ENCODE measurements at regions of chr1 and their contacts with region 1.

Region 1: GRCh38 chr1:65209005-65209885 is 61.2 kb downstream of the AK4 start:
- DNase-seq: peak in 1 of 5 donors; percentile 39
- ATAC-seq: peak; percentile 25 to 73 (median 58)
- H3K4me3 ChIP-seq: no peak overlapping the region
- H3K27ac ChIP-seq: peak overlapping the region in 2 of 12 donors; percentile 35 to 49
- H3K4me1 ChIP-seq: peaks cover 0 to 23% (median 14%) of the 10 kb centered on the region in 12 donors
- H3K27me3 ChIP-seq: no peaks in the 10 kb centered on the region
- CTCF ChIP-seq: peak; percentile 58 to 81 (median 68)
- POLR2A ChIP-seq: no peak

Region 2: DNA sequence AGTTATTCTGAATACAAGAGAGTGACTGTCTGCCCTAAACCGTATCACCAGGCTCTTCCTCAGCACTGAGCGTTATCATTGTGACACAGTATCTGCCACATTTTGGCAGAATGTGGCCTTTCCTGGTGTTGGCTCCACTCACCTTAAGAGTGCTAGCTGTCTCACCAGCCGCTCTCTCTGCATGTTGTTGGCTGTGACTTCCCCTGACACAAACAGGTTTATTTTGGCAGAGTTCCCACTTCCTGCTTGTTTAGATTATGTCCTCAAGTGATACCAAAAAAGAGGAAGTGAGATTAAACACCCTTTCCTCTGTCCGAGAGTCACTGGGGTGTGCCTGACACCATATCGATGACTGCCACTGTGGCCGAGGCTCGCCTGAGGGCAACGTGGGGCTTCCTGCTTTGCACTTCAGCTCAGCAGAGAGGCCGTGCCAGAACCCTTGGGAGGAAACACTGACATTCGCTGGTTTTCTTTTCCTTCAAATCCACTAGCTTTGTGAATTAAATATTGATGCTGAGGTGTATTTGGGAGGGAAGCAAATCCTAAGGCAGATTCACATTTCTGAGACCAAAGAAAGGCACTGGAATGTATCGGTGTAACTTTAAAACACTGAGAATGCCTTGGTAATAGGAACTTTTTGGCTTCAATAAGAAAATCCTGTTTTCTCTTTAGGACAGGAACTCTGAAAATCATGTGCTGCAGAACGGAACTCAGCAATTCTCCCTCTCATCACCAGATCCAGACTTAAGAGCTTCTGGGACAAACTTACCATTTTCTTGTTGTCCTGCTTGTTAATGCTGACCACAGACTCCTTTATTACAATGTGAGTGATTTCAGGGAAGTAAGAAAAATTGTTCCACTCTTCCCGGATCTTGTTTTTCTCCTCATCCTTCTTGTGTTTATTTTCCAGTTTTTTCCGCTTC is 345.0 kb before region 1 on chr1:
- intact Hi-C with region 1: loop called in 3 of 10 experiments (anchors 10 kb)
- DNase-seq: peak; percentile 63 to 88 (median 77)
- ATAC-seq: peak; percentile 45 to 94 (median 85)
- H3K4me3 ChIP-seq: no peak overlapping the region
- H3K27ac ChIP-seq: peak overlapping the region in 9 of 12 donors; percentile 17 to 85 (median 39)
- H3K4me1 ChIP-seq: peaks cover 0 to 28% (median 5%) of the 10 kb centered on the region in 12 donors
- H3K27me3 ChIP-seq: no peaks in the 10 kb centered on the region
- CTCF ChIP-seq: no peak
- POLR2A ChIP-seq: no peak

Region 3: GRCh38 chr1:65059930-65060538 is 149.2 kb before region 1 on chr1:
- intact Hi-C with region 1: loop called in 9 of 10 experiments (anchors 1 to 5 kb)
- DNase-seq: no peak
- ATAC-seq: peak in 2 of 4 donors; percentile 43 to 49
- H3K4me3 ChIP-seq: no peak overlapping the region
- H3K27ac ChIP-seq: no peak overlapping the region
- H3K4me1 ChIP-seq: peaks cover 0 to 90% (median 58%) of the 10 kb centered on the region in 12 donors
- H3K27me3 ChIP-seq: no peaks in the 10 kb centered on the region
- CTCF ChIP-seq: peak; percentile 49 to 78 (median 70)
- POLR2A ChIP-seq: no peak

Region 4: GRCh38 chr1:65075123-65075976 is 133.9 kb before region 1 on chr1:
- intact Hi-C with region 1: loop called in 3 of 10 experiments (anchors 5 kb)
- DNase-seq: peak in 3 of 5 donors; percentile 37 to 59 (median 53)
- ATAC-seq: peak; percentile 65 to 89 (median 83)
- H3K4me3 ChIP-seq: no peak overlapping the region
- H3K27ac ChIP-seq: no peak overlapping the region
- H3K4me1 ChIP-seq: no peaks in the 10 kb centered on the region
- H3K27me3 ChIP-seq: no peaks in the 10 kb centered on the region
- CTCF ChIP-seq: peak; percentile 59 to 81 (median 73)
- POLR2A ChIP-seq: no peak

Region 5: DNA sequence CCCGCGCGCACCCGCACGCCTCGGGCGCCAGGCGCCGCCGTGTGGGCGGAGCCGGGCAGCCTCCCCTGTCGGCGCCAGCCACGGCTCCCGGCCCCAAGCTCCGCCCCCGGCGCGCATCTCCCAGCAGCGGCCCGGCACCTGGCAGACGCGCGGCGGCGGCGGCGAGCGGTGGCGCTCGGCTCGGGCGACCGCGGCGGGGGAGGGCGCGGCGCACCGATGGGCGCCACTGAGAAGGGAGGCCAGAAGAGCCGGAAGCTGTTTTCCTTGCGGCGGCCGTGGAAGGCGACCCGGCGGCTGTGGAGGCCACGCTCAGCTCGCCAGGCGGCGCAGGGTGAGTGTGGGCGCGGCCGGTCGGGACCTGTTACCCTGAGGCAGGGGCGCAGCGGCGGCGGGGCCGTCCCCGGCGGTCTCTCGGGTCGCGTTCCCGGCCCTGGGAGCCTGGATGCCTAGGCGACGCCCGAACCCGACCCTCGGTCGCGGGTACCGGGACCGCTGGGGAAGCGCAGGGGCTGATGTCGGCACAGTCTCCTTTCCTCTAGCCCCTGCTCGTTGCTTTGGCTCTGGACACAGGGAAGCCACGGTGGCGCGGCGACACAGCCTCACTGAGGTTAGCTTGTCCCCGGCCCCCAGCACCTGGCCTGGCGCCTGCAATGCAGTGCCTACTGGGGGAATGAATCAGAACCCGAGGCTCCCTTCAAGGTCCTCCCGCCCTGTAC is 45.2 kb after region 1 on chr1:
- intact Hi-C with region 1: no loop called
- DNase-seq: peak; percentile 75 to 90 (median 83)
- ATAC-seq: peak; percentile 63 to 97 (median 92)
- H3K4me3 ChIP-seq: peak overlapping the region; percentile 69 to 99 (median 80)
- H3K27ac ChIP-seq: peak overlapping the region in 9 of 12 donors; percentile 24 to 82 (median 65)
- H3K4me1 ChIP-seq: peaks cover 0 to 28% (median 10%) of the 10 kb centered on the region in 12 donors
- H3K27me3 ChIP-seq: peaks cover 0 to 15% (median 0%) of the 10 kb centered on the region in 9 donors
- CTCF ChIP-seq: peak in 6 of 12 donors; percentile 18 to 50 (median 27)
- POLR2A ChIP-seq: no peak

Region 6: DNA sequence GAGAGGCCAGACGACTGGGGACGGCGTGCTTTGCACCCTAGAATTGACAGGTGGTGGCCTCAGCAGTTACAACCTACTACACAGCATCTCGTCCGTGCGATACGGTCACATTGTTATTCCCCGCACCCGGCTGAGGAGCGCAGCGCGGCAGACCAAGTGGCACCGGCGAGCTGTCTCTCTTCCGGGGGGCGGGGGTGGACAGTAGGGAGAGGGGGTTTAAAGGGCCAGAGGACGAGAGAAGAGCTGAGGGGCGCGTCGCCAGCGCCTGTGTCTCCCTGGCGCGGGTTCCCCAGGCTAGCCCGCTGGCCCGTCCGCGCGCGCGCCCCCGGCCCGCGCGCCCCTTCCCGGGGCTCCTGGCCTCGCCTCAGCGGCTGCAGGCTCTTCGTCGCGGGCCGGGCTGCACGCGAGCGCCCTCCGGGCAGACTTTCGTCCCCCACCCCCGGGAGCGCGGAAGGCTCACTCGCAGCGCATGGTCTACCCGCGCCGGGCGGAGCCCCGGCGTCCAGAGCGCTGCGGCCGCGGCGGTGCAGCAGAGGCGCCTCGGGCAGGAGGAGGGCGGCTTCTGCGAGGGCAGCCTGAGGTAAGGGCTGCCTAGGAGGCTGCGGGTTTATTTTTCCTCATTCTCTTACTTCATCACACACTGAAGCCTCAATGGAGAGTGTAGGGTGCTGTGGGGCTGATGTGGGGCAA is 583.6 kb after region 1 on chr1 and contains the start of gene PDE4B:
- intact Hi-C with region 1: no loop called
- DNase-seq: peak in 1 of 5 donors; percentile 61
- ATAC-seq: peak in 2 of 4 donors; percentile 36 to 39
- H3K4me3 ChIP-seq: peak within 1 kb of the TSS in 11 of 12 donors; percentile 3 to 58 (median 28)
- H3K27ac ChIP-seq: peak within 1 kb of the TSS in 1 of 12 donors; percentile 18
- H3K4me1 ChIP-seq: peaks cover 0 to 19% (median 0%) of the 10 kb centered on the region in 12 donors
- H3K27me3 ChIP-seq: peaks cover 17 to 55% (median 32%) of the 10 kb centered on the region in 9 donors
- CTCF ChIP-seq: no peak
- POLR2A ChIP-seq: no peak
- total RNA-seq, gene PDE4B: 5.9 to 71.9 (median 16.2) TPM

Measured in heart left ventricle (tissue), 16 donors.